ENCODE measurements at regions of chr7 and their contacts with region 1.

Region 1: GRCh38 chr7:105149827-105150226 is 135.8 kb downstream of the KMT2E start:
- DNase-seq: no peak
- ATAC-seq: no peak
- H3K4me3 ChIP-seq: no peak overlapping the region
- H3K27ac ChIP-seq: no peak overlapping the region
- H3K4me1 ChIP-seq: no peaks in the 10 kb centered on the region; a peak in 1 of 5 replicates
- H3K27me3 ChIP-seq: no peaks in the 10 kb centered on the region
- CTCF ChIP-seq: no peak
- EP300 ChIP-seq: no peak
- POLR2A ChIP-seq: no peak
- RAD21 ChIP-seq: no peak

Region 2: GRCh38 chr7:105336009-105336408 is 186.2 kb after region 1 on chr7:
- CTCF ChIA-PET with region 1: interaction called, 12 read pairs
- POLR2A ChIA-PET with region 1: no interaction called
- in situ Hi-C with region 1: no loop called
- intact Hi-C with region 1: loop called (anchors 1 kb)
- DNase-seq: no peak
- ATAC-seq: no peak
- H3K4me3 ChIP-seq: no peak overlapping the region
- H3K27ac ChIP-seq: no peak overlapping the region
- H3K4me1 ChIP-seq: peaks cover 0 to 4% of the 10 kb centered on the region in 2 experiments; a peak in 1 of 5 replicates
- H3K27me3 ChIP-seq: no peaks in the 10 kb centered on the region
- CTCF ChIP-seq: peak in 1 of 3 experiments; percentile 59; a peak in 2 of 6 replicates
- EP300 ChIP-seq: no peak
- POLR2A ChIP-seq: no peak
- RAD21 ChIP-seq: peak; percentile 55 to 58

Region 3: DNA sequence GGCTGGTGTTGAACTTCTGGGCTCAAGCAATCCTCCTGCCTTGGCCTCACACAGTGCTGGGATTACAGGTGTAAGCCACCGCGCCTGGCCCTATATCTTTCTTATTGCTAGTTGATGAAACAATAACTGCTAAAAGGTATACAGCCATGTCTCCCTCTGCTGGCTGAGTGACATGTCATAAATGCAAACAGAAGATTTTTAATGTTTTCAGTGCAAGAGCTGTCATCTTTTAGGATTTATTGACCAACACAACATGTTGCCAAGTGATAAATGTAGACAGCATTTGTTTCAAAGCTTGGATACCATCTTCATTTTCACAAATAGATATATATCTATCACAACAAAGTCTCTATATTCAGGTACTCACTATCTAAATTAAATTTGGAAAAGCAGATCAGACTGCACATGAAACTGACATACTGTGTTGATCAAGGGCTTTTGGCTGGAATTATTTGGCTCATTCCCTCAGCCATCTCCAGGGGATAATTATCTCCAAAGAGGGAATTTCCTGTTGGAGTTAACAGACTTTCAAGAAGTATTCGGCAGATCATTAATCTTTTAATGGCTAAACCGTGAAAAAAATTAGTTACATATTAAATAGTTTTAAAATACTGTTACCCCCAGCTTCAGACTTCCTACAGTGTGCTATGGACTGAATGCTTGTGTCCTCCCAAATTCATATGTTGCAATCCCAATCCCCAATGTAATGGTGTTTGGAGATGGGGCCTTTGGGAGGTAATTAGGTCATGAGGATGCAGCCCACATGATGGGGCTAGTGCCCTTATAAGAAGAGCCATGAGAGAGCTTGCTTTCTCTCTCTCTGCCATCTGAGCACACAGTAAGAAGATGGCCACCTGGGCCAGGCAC is 280.2 kb after region 1 on chr7:
- CTCF ChIA-PET with region 1: interaction called, 7 read pairs
- POLR2A ChIA-PET with region 1: interaction called, 3 read pairs
- in situ Hi-C with region 1: loop called (anchors 5 kb)
- intact Hi-C with region 1: loop called (anchors 1 kb)
- DNase-seq: peak in 3 of 4 experiments; percentile 41 to 82 (median 63)
- ATAC-seq: peak; percentile 90
- H3K4me3 ChIP-seq: no peak overlapping the region
- H3K27ac ChIP-seq: no peak overlapping the region
- H3K4me1 ChIP-seq: peaks cover 0 to 5% of the 10 kb centered on the region in 2 experiments; a peak in 1 of 5 replicates
- H3K27me3 ChIP-seq: no peaks in the 10 kb centered on the region
- CTCF ChIP-seq: peak; percentile 74 to 92 (median 80)
- EP300 ChIP-seq: peak; percentile 41
- POLR2A ChIP-seq: no peak
- RAD21 ChIP-seq: peak; percentile 87 to 95

Region 4: DNA sequence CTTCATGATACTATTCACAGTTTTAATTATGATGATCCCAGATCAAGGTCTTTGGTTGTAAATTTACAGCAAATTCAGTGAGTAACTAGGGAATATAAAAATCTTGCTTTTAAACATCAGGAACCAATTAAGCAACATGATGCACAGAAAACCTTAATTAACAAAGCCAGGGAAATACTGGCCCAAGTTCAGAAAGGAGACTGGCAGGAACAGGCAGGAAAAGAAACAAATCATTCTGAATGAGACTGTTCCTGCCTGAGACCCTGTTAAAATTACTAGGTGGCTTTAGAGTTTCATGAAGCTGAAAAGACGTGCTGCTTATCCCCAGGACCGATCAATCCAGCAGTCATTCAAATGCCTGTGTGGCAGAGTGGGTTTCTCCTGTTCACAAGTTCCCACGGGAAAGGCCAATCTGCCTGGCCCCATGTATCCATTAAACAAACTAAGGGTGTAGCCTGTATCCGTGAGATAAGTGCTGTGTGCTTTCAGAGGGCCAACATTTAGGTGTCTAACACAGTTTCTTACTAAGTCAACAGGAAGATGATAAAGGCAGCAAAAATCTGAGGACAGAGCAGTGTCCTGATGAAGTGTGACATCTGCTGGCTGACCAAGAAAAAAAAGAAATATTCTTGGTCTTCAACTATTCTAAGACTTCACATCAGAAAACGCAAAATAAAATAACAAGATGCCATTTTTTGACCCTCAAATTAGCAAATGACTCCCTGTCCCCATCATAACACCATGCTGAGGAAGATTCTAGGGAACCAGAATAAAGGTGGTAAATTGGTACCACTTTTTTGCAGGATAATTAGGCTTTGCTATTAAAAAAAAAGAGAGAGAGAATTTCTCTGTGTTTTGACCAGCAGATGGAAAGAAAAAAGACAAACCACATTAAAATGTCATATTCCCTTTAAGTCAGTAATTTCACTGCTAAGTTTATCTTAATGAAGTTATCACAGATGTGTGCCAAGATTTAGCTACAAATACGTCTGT is 338.0 kb after region 1 on chr7:
- CTCF ChIA-PET with region 1: interaction called, 7 read pairs
- POLR2A ChIA-PET with region 1: no interaction called
- in situ Hi-C with region 1: no loop called
- intact Hi-C with region 1: loop called (anchors 1 kb)
- DNase-seq: peak; percentile 33 to 83 (median 62)
- ATAC-seq: peak; percentile 96
- H3K4me3 ChIP-seq: no peak overlapping the region
- H3K27ac ChIP-seq: peak overlapping the region; percentile 27; the same call in 2 of the 3 replicates
- H3K4me1 ChIP-seq: peaks cover 0 to 10% of the 10 kb centered on the region in 2 experiments; a peak in 2 of 5 replicates
- H3K27me3 ChIP-seq: no peaks in the 10 kb centered on the region
- CTCF ChIP-seq: peak; percentile 56 to 93 (median 77); a peak in 5 of 6 replicates
- EP300 ChIP-seq: peak; percentile 79
- POLR2A ChIP-seq: no peak
- RAD21 ChIP-seq: peak; percentile 89 to 93